Activated CD4-positive, alpha-beta T cell treated with anti-CD3 and anti-CD28 coated beads for 36 hours (primary cell): ENCODE measurements at regions of chr9 and their contacts with region 1.

Region 1: DNA sequence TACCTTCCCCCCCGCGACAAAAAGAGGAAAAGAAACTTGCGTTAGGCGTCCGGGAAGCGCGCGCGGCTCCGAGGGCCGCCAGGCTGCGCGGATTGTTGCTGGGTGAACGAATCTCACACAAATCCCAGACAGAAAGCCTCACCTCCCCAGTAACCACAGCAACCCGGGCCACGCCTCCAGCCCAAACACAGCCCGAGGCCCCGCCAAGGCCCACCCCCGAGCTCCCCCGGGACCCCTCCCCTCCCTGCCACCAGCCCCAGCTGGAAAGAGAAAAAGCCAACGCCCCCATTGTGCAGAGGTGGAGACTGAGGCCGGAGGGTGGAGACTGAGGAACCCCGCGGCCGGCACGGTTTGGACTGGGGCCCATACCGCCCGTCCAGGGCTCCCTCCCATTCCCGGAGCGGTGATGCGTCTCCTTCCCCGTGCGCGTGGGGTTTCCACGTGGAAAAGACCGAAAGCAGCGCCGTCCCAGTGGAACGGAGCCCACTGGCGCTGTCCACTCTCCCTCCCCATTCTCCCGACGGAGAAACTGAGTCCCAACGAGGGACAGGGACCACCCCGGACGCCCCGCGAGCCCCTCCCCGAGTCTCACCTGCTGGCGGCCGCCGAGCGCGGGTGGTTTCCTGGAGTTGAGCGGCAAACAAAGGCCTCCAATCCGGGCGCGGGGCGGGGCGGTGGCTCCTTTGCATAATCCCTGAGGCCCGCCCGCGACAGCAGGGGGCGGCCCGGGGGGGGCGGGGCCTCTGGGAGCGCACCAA is 10.2 kb upstream of the AKNA start:
- DNase-seq: peak; percentile 98
- ATAC-seq: peak; percentile 87
- H3K4me3 Mint-ChIP-seq: peak overlapping the region; percentile 93
- H3K27ac Mint-ChIP-seq: peak overlapping the region; percentile 89
- H3K4me1 Mint-ChIP-seq: peaks cover 46% of the 10 kb centered on the region
- H3K27me3 Mint-ChIP-seq: no peaks in the 10 kb centered on the region

Region 2: GRCh38 chr9:114098016-114098935 is 299.8 kb before region 1 on chr9:
- CTCF ChIA-PET with region 1: no interaction called
- POLR2A ChIA-PET with region 1: no interaction called
- intact Hi-C with region 1: loop called in 1 of 2 experiments (anchors 1 kb)
- DNase-seq: peak; percentile 71
- ATAC-seq: peak; percentile 86
- H3K4me3 Mint-ChIP-seq: no peak overlapping the region
- H3K27ac Mint-ChIP-seq: no peak overlapping the region
- H3K4me1 Mint-ChIP-seq: no peaks in the 10 kb centered on the region
- H3K27me3 Mint-ChIP-seq: peaks cover 36% of the 10 kb centered on the region

Region 3: GRCh38 chr9:114366334-114367128 is 31.5 kb before region 1 on chr9:
- CTCF ChIA-PET with region 1: interaction called, 4 read pairs
- POLR2A ChIA-PET with region 1: no interaction called
- intact Hi-C with region 1: loop called in 1 of 2 experiments (anchors 1 kb)
- DNase-seq: peak; percentile 69
- ATAC-seq: peak; percentile 72
- H3K4me3 Mint-ChIP-seq: peak overlapping the region; percentile 16
- H3K27ac Mint-ChIP-seq: peak overlapping the region; percentile 84
- H3K4me1 Mint-ChIP-seq: peaks cover 82% of the 10 kb centered on the region
- H3K27me3 Mint-ChIP-seq: no peaks in the 10 kb centered on the region

Region 4: DNA sequence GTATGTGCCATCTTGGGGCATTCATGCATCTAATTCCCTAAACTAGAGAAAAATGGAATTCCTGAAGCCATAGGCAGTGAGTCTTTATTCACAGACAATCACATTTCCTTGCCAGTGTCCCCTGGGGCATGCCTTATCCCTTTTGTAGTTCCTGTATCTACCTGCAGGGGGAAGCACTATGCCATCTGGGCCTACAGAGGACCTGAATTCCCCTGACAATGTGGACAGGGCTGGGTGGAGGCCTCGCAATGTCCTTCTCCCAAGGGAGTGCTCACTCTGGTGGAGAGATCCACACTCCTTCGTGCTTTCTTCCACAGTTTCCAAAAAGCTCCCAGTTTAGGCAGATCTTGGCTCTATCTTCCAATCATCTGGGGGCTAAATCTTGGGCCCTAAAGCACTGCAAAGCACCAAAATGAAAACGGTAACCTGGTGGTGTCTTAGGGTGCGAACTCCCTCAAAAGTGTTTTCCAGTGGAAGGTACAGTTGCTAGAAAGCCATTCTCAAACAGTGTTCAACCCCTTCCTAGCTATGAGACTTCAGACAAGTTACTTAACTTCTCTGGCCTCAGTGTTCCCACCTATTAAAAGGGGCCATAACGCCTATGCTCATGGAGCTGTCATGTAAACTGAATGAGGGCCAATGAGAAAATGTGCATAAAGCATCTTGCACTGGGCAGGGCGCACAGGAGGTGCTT is 89.7 kb after region 1 on chr9:
- CTCF ChIA-PET with region 1: no interaction called
- POLR2A ChIA-PET with region 1: no interaction called
- intact Hi-C with region 1: loop called in 1 of 2 experiments (anchors 5 kb)
- DNase-seq: peak; percentile 72
- ATAC-seq: peak; percentile 63
- H3K4me3 Mint-ChIP-seq: no peak overlapping the region
- H3K27ac Mint-ChIP-seq: no peak overlapping the region
- H3K4me1 Mint-ChIP-seq: peaks cover 25% of the 10 kb centered on the region
- H3K27me3 Mint-ChIP-seq: no peaks in the 10 kb centered on the region

Region 5: DNA sequence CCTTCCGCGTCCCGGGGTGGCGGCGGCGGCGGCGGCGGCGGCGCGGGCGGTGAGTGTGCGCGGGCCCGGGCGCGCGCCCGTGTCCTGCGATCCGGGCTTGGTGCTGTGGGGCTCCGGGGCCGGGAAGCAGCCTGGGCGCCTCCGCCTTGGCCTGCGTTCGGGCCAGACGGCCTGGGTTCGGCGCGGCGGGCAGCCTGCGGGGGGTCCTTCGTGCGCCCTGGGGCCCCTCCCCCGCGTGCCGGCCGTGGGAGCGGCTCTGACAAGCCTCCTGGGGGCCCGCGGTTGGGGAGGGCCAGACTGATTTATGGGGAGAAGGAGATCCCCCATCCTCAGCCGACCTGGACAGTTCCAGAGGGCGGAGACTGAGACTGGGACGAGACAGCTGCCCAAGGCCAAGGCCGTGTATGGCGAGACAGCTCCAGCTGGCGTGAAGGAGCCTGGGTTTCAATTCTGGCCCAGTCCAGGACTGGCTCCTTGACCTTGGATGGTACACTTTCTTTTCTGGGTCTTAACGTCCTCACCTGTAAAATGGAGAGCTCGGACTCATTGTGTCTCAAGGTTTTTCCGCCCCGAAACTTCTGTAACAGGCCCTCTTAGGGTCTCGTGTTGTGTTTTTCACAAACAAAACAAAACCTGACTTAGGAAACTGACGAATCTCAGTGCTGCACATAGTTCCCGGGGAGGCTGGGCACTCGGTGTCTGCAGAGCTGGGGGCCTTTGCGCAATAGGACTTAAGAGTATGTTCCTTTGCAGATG is 213.7 kb after region 1 on chr9:
- CTCF ChIA-PET with region 1: no interaction called
- POLR2A ChIA-PET with region 1: interaction called, 3 read pairs
- intact Hi-C with region 1: loop called (anchors 2 to 5 kb)
- DNase-seq: peak; percentile 66
- ATAC-seq: peak; percentile 66
- H3K4me3 Mint-ChIP-seq: peak overlapping the region; percentile 77
- H3K27ac Mint-ChIP-seq: peak overlapping the region; percentile 79
- H3K4me1 Mint-ChIP-seq: peaks cover 50% of the 10 kb centered on the region
- H3K27me3 Mint-ChIP-seq: no peaks in the 10 kb centered on the region